ENCODE measurements at regions of chr14 and their contacts with region 1.

Region 1: DNA sequence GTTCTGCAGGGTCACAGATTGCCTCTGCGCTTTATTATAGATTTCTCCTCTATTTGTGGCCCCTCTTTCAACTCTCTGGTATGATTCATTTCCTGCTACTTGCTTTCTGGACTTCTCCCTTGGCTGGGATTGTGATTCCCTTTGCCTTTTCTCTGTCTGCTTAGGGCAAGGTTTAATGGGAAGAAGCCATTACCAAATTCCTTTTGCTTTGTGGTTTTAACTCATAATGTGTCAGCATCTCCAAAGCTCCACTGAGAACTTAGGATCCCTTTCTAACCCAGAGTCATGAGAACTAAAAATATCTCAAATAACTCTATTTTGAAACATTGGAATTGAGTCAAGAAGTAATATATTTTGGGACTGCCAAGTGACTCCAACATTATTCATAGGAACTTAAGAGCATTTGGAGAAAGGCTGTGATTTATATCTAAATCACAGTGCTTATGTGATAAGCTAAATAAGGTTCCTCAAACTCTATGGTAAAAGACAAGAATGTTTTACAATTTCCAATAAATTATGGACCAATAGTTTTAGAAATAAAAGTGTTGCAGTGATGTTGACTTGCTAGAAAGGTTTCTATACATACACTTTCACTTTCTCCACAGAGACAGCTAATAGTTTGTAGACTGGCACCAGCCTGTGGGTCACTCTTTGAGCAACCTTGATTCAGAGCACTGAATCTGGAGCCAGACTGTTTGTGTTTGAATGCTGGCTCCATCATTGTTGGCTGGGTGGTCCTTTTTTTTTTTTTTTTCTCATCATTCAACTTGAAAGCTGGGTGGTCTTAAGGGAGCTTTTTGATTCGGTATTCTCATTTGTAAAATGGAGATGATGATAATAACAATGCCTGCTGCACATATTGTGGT is 93.9 kb downstream of the DACT1 start:
- DNase-seq: peak; percentile 76
- H3K4me3 ChIP-seq: no peak overlapping the region
- H3K27ac ChIP-seq: peak overlapping the region; percentile 50
- H3K4me1 ChIP-seq: peaks cover 21% of the 10 kb centered on the region
- H3K27me3 ChIP-seq: peaks cover 0 to 1% of the 10 kb centered on the region in 2 experiments
- CTCF ChIP-seq: no peak
- POLR2A ChIP-seq: no peak

Region 2: GRCh38 chr14:58749066-58749669 is 17.5 kb after region 1 on chr14:
- CTCF ChIA-PET with region 1: interaction called, 7 read pairs
- POLR2A ChIA-PET with region 1: no interaction called
- dilution Hi-C with region 1: no loop called
- intact Hi-C with region 1: loop called (anchors 1 kb)
- DNase-seq: peak; percentile 45
- H3K4me3 ChIP-seq: no peak overlapping the region
- H3K27ac ChIP-seq: no peak overlapping the region
- H3K4me1 ChIP-seq: peaks cover 17% of the 10 kb centered on the region
- H3K27me3 ChIP-seq: no peaks in the 10 kb centered on the region
- CTCF ChIP-seq: no peak
- POLR2A ChIP-seq: no peak

Measured in endothelial cell of umbilical vein (primary cell).